ENCODE measurements at regions of chr7 and their contacts with region 1.

Region 1: GRCh38 chr7:25851332-25852210 is 300.4 kb upstream of the NFE2L3 start:
- DNase-seq: peak; percentile 57 to 95 (median 84)

Region 2: DNA sequence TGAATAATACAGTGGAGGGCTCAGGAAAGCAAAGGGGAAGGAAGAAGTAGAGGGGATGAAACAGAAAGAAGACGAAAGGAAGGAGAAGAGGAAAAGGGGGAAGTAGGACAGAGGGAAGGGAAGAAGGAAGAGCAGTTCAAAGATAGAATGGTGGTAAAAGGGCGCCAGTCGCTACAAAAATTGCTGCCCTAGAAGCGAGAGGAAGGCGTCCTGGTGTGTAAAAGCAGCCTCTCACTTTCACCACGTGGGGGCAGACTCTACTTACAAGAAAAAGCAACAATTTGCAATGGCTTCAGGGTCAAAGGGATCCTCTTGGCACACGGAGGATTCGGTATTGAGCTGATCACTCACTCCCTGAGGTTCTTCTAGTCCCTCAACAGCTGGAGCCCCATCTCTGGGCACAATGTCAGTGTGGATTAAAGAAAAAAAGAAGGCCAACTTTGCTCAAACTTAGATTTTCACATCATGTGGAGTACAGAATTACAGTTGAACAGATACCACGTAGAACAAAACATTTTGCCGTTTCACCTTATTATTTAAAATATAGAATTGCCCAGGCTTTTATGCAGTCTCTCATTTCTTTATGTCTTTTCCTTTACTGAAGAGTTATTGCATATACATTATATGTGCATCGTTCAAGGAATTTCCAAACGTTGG is 591.9 kb before region 1 on chr7:
- intact Hi-C with region 1: loop called (anchors 2 kb)
- DNase-seq: peak in 8 of 10 donors; percentile 16 to 90 (median 60)

Region 3: DNA sequence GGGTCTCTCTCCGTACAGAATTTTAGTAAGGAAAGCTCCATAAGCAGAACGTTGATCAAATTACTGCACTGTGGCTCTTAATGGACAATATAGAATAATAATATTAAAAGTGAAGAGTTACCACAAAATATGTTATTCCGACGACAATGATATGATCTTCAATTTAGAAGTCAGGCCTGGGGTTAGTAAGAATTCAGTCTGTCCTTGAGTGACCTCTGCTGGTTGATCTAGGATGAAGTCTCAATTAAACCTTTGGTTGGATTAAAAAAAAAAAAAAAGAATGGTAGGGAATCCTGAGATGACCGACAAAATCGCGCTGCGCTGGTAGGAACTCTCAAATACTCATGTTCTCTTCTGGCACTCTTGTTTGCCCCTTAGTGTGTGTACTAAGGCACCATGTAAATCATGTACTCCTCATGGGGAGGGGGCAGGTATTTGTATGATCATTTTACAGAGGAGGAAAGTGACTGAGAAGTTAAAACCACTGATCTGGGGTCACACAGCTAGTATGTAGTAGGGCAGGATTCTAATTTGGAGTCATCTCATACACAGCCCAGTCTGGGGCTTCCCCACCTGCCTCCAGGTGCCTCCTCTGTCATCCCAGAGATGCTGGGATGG is 462.0 kb before region 1 on chr7:
- intact Hi-C with region 1: loop called (anchors 1 kb)
- DNase-seq: no peak

Region 4: GRCh38 chr7:25565949-25566348 is 285.6 kb before region 1 on chr7:
- intact Hi-C with region 1: loop called (anchors 1 kb)
- DNase-seq: peak in 9 of 10 donors; percentile 36 to 90 (median 59)

Region 5: GRCh38 chr7:25720427-25720826 is 131.1 kb before region 1 on chr7:
- intact Hi-C with region 1: loop called (anchors 10 kb)
- DNase-seq: no peak